PC-9 (cell line): ENCODE measurements at regions of chr12 and their contacts with region 1.

Region 1: DNA sequence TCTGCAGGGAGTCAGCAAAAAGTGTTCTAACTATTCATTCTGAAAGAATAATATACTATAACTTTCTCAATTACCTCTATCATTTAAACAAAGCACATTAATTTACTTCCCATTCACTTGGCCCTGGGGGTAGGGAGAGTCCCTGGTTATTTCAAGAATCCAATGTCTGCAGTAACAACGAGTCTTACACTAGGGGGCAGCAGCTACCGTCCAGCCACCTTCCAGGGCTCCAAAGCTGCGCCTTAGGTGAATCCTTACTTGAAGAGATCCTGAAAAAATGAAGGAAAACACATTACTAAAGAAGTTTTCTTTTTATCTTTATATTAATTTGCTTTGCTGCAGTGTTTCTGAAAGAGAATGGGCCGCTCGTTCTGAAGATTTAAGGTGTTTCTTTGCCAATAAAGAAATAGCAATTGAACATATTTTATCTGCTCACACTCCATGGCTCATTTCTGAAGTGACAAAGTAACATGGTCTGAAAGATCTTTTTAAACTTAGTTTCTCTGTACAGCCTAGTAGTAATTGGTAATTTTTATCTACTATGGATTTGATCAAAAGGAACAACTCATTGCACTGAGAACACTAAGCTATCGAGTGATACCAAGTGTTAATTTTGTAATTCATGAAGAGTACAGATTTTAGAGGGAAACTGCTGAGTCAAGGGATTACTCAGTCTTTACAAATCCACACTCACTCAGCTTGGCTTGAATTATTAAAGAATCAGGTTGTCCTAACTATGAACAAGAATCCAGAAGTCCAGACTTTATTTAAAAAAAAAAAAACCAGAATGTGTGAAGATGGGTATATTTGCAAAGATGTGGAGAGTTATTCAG is 27.6 kb downstream of the BHLHE41 start:
- DNase-seq: peak; percentile 74 to 82
- H3K4me3 ChIP-seq: peak overlapping the region; percentile 12; the same call in 1 of the 2 replicates
- H3K27ac ChIP-seq: peak overlapping the region; percentile 66
- H3K4me1 ChIP-seq: peaks cover 66% of the 10 kb centered on the region
- H3K27me3 ChIP-seq: no peaks in the 10 kb centered on the region
- CTCF ChIP-seq: peak; percentile 95

Region 2: GRCh38 chr12:25250744-25251730 is 846.2 kb before region 1 on chr12 and contains the start of gene KRAS:
- CTCF ChIA-PET with region 1: no interaction called
- POLR2A ChIA-PET with region 1: no interaction called
- intact Hi-C with region 1: loop called (anchors 10 kb)
- DNase-seq: peak; percentile 85 to 99
- H3K4me3 ChIP-seq: peak within 1 kb of the TSS; percentile 96
- H3K27ac ChIP-seq: peak within 1 kb of the TSS; percentile 14; the same call in 1 of the 2 replicates
- H3K4me1 ChIP-seq: peaks cover 18% of the 10 kb centered on the region
- H3K27me3 ChIP-seq: no peaks in the 10 kb centered on the region
- CTCF ChIP-seq: no peak
- total RNA-seq, gene KRAS: 34.0 and 40.0 TPM in 2 replicates

Region 3: GRCh38 chr12:26113853-26114719 is 16.8 kb after region 1 on chr12:
- CTCF ChIA-PET with region 1: interaction called, 11 read pairs
- POLR2A ChIA-PET with region 1: interaction called, 5 read pairs
- intact Hi-C with region 1: loop called (anchors 1 kb)
- DNase-seq: peak; percentile 91 to 92
- H3K4me3 ChIP-seq: peak overlapping the region; percentile 57
- H3K27ac ChIP-seq: peak overlapping the region; percentile 93
- H3K4me1 ChIP-seq: peaks cover 61% of the 10 kb centered on the region
- H3K27me3 ChIP-seq: no peaks in the 10 kb centered on the region
- CTCF ChIP-seq: peak; percentile 46

Region 4: GRCh38 chr12:26274441-26275312 is 177.4 kb after region 1 on chr12:
- CTCF ChIA-PET with region 1: interaction called, 4 read pairs
- POLR2A ChIA-PET with region 1: interaction called, 5 read pairs
- intact Hi-C with region 1: loop called (anchors 1 kb)
- DNase-seq: peak; percentile 88 to 99
- H3K4me3 ChIP-seq: peak overlapping the region; percentile 16; the same call in 1 of the 2 replicates
- H3K27ac ChIP-seq: peak overlapping the region; percentile 98
- H3K4me1 ChIP-seq: peaks cover 67% of the 10 kb centered on the region
- H3K27me3 ChIP-seq: no peaks in the 10 kb centered on the region
- CTCF ChIP-seq: peak; percentile 66

Region 5: GRCh38 chr12:26493656-26494055 is 396.4 kb after region 1 on chr12:
- CTCF ChIA-PET with region 1: no interaction called
- POLR2A ChIA-PET with region 1: no interaction called
- intact Hi-C with region 1: loop called (anchors 5 kb)
- DNase-seq: peak; percentile 59 to 81
- H3K4me3 ChIP-seq: no peak overlapping the region
- H3K27ac ChIP-seq: peak overlapping the region; percentile 38
- H3K4me1 ChIP-seq: peaks cover 16% of the 10 kb centered on the region
- H3K27me3 ChIP-seq: no peaks in the 10 kb centered on the region
- CTCF ChIP-seq: no peak

Region 6: DNA sequence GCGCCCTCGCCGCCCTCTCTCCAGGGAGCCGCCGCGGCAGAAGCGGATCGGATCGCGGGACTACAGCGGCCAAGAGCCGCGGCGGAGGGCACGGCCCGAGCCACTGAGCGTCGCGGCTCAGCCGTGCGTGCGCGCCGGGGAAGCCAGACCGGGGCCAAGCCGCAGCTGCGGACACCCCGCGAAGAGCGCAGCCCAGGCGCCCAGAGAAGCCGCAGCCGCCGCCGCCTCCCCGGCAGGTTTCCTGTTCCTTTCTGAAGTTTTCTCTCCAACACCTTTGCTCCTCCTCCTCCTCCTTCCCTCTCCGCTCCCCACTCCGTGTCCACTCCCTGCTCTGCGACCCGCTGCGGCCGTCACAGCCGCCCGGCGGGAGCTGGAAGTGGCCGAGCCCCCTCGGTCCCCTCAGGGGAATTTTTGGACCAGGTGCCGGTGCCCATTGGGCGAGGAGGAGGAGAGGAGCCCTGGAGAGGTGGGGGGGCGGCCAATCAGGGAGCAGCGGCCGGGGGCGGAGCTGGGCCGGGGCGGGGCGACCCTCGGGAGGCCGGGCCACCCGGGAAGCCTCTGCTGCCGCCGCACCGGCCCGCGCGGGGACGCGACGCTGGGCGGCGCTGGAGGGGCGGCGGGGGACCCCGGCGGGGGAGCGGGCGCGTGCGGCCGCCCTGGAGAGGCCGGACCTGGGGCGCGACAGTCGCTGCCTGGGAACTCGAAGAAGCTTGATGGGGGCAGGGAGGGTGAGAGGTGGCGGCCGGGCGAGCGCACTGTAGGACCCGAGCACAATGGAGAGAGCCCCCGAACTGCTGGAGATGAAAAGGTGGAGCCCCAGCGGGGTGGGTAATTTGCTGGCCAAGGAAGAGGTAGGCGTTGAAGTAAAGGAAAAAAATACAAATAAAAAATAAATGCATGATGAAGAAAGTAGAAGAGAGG is 735.8 kb after region 1 on chr12 and contains the start of gene ITPR2:
- CTCF ChIA-PET with region 1: no interaction called
- POLR2A ChIA-PET with region 1: no interaction called
- intact Hi-C with region 1: loop called (anchors 2 kb)
- DNase-seq: peak; percentile 80 to 99
- H3K4me3 ChIP-seq: peak within 1 kb of the TSS; percentile 83
- H3K27ac ChIP-seq: peak within 1 kb of the TSS; percentile 61
- H3K4me1 ChIP-seq: peaks cover 14% of the 10 kb centered on the region
- H3K27me3 ChIP-seq: no peaks in the 10 kb centered on the region
- CTCF ChIP-seq: peak; percentile 51; the same call in 1 of the 2 replicates
- total RNA-seq, gene ITPR2: 16.2 and 26.0 TPM in 2 replicates